Naive thymus-derived CD4-positive, alpha-beta T cell (primary cell): ENCODE measurements at regions of chr6 and their contacts with region 1.

Region 1: DNA sequence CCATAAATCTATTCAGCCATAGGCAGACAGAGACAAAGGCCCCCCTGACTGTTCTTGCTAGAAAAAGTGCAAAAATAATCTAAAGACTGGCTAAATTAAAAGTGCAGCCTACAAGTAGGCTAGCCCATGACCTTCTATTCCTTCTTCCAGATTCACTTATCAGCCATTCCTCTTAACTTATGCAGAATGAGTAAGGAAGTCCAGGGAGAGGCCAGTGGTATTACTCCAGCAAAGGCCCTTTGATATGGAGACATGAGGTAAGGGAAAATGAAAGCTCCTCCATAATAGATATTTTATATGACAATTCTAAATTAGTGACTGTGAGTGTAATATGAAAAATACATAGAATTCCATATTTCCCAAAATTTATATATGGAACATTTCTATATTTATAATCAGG is 199.4 kb downstream of the TBC1D32 start:
- DNase-seq: no peak
- ATAC-seq: no peak
- H3K4me3 ChIP-seq: no peak overlapping the region
- H3K4me3 Mint-ChIP-seq: no peak overlapping the region
- H3K27ac ChIP-seq: no peak overlapping the region
- H3K27ac Mint-ChIP-seq: no peak overlapping the region
- H3K4me1 ChIP-seq: no peaks in the 10 kb centered on the region
- H3K4me1 Mint-ChIP-seq: peaks cover 0 to 1% (median 0%) of the 10 kb centered on the region in 7 donors
- H3K27me3 ChIP-seq: no peaks in the 10 kb centered on the region
- H3K27me3 Mint-ChIP-seq: no peaks in the 10 kb centered on the region

Region 2: DNA sequence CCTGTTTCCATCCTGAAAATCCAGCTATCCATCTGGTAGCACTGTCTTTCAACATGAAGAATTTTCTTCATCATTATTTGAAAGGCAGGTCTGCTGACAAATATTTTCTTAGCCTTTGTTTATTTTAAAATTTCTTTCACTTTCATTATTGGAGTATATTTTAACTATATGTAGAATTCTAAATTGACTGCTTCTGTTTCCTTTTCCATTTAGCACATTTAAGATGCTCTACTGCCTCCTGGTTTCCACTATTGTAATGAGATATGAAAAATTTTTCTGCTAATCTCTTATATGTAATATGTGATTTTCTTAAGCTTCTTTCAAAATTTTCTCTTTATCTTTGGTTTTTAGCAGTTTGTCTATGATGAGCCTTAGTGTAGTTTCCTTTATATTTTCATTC is 102.1 kb after region 1 on chr6:
- CTCF ChIA-PET with region 1: no interaction called
- POLR2A ChIA-PET with region 1: no interaction called
- intact Hi-C with region 1: loop called in 1 of 2 experiments (anchors 5 kb)
- DNase-seq: peak in 1 of 9 donors; percentile 6
- ATAC-seq: no peak
- H3K4me3 ChIP-seq: no peak overlapping the region
- H3K4me3 Mint-ChIP-seq: peak overlapping the region in 1 of 10 donors; percentile 10
- H3K27ac ChIP-seq: no peak overlapping the region
- H3K27ac Mint-ChIP-seq: no peak overlapping the region
- H3K4me1 ChIP-seq: no peaks in the 10 kb centered on the region
- H3K4me1 Mint-ChIP-seq: no peaks in the 10 kb centered on the region
- H3K27me3 ChIP-seq: no peaks in the 10 kb centered on the region
- H3K27me3 Mint-ChIP-seq: no peaks in the 10 kb centered on the region

Region 3: DNA sequence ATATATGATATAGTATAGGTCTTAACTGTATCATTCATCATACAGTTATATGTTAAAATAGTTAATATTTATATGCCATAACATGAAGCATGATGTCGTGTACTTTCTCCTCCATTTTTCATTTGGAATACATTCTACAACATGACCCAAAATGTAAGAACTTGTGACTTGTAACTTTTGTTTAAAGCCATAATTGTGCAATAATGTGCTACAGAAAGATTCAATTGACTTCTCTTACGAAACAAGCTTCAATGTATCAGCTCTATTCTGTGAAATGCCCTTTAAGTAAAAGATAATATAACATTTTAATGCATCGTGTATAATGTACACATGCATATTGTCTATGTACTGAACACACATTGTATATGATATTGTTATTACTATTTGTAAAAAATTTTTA is 1567.9 kb after region 1 on chr6:
- CTCF ChIA-PET with region 1: no interaction called
- POLR2A ChIA-PET with region 1: no interaction called
- intact Hi-C with region 1: no loop called
- DNase-seq: no peak
- ATAC-seq: no peak
- H3K4me3 ChIP-seq: no peak overlapping the region
- H3K4me3 Mint-ChIP-seq: no peak overlapping the region
- H3K27ac ChIP-seq: no peak overlapping the region
- H3K27ac Mint-ChIP-seq: no peak overlapping the region
- H3K4me1 ChIP-seq: no peaks in the 10 kb centered on the region
- H3K4me1 Mint-ChIP-seq: no peaks in the 10 kb centered on the region
- H3K27me3 ChIP-seq: no peaks in the 10 kb centered on the region
- H3K27me3 Mint-ChIP-seq: peaks cover 0 to 9% (median under 1%) of the 10 kb centered on the region in 5 donors